Left ventricle myocardium inferior (tissue), 1 donor: ENCODE measurements at regions of chr3 and their contacts with region 1.

Region 1: DNA sequence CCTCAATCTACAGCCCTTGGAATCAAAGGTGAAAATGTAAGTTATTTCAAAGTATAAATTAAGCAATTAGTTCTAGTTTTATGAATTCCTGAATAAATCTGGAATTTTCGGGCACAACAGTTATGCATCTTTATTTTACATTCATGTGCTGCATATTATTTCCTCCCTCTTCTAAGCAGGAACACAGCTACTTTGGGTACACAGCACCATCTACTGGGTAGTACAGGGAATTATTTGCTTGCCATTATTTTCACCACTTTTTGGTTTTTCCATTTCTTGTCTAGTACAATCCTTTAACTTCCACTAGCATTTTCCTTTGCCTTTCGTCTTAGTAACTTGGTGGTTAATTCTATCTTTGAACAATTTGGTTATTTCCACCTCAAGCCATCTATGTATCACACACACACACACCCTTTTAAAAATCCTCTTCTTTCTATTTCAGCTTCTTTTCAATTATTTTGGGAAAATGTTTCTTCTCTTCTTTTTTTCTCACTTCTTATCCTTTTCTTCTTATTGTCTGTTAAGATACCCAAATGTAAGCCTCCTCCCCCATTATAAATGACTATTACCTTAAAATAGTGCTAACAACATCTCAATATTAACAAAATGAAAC is 451.0 kb downstream of the MFSD1 start:
- DNase-seq: no peak
- H3K4me3 ChIP-seq: no peak overlapping the region
- H3K27ac ChIP-seq: no peak overlapping the region
- H3K4me1 ChIP-seq: no peaks in the 10 kb centered on the region
- H3K27me3 ChIP-seq: no peaks in the 10 kb centered on the region
- CTCF ChIP-seq: peak; percentile 37

Region 2: DNA sequence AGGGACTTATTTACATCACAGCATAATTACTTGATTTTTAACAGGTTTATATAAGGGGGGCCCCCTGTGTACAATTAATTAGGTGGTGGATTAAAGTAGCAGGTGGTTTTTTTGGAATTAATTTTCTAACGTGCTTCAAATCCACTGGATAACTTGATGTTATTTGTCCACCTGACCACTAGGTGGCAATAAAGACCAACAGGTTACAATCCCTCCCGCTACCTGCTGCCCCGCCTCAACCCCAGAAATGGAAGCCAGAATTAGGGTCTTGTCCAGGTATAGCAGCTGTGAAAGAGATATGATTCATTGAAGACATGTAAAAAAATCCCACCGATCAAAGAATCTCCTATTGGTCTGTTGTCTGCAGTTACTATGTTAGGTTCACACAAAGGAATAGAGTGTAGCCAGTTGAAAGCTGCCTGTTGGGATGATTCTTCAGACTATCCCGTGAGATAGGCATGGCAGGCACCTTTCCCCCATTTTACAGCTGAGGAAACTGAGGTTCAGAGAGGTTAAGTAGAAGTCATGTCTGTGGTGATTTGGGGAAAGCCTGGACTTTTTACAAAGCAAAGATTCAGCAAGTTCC is 407.0 kb before region 1 on chr3:
- intact Hi-C with region 1: loop called (anchors 5 kb)
- DNase-seq: no peak
- H3K4me3 ChIP-seq: no peak overlapping the region
- H3K27ac ChIP-seq: no peak overlapping the region
- H3K4me1 ChIP-seq: no peaks in the 10 kb centered on the region
- H3K27me3 ChIP-seq: no peaks in the 10 kb centered on the region
- CTCF ChIP-seq: peak; percentile 72

Region 3: GRCh38 chr3:158918008-158918407 is 334.9 kb before region 1 on chr3:
- intact Hi-C with region 1: loop called (anchors 10 kb)
- DNase-seq: no peak
- H3K4me3 ChIP-seq: no peak overlapping the region
- H3K27ac ChIP-seq: no peak overlapping the region
- H3K4me1 ChIP-seq: no peaks in the 10 kb centered on the region
- H3K27me3 ChIP-seq: no peaks in the 10 kb centered on the region
- CTCF ChIP-seq: peak; percentile 64

Region 4: DNA sequence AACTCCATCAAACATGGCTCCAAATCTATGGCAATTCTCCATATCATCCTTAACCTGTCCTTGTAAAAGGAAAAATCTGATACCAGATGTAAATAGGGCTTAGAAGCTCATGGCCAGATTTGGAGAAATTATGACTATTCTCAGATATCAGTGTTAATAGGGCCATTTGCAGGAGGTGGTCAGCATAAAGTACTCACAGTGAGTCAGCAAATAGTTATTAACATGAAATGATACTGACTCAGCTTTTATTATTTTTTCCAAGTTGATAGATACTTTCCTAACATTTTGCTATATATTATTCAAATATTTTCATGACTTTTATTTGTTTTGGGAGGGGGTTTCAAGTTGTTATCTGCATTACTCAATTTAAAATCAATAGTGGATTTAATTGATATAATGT is 195.3 kb before region 1 on chr3:
- intact Hi-C with region 1: no loop called
- DNase-seq: no peak
- H3K4me3 ChIP-seq: no peak overlapping the region
- H3K27ac ChIP-seq: no peak overlapping the region
- H3K4me1 ChIP-seq: no peaks in the 10 kb centered on the region
- H3K27me3 ChIP-seq: no peaks in the 10 kb centered on the region
- CTCF ChIP-seq: no peak